Endothelial cell of umbilical vein (primary cell): ENCODE measurements at regions of chr6 and their contacts with region 1.

Region 1: DNA sequence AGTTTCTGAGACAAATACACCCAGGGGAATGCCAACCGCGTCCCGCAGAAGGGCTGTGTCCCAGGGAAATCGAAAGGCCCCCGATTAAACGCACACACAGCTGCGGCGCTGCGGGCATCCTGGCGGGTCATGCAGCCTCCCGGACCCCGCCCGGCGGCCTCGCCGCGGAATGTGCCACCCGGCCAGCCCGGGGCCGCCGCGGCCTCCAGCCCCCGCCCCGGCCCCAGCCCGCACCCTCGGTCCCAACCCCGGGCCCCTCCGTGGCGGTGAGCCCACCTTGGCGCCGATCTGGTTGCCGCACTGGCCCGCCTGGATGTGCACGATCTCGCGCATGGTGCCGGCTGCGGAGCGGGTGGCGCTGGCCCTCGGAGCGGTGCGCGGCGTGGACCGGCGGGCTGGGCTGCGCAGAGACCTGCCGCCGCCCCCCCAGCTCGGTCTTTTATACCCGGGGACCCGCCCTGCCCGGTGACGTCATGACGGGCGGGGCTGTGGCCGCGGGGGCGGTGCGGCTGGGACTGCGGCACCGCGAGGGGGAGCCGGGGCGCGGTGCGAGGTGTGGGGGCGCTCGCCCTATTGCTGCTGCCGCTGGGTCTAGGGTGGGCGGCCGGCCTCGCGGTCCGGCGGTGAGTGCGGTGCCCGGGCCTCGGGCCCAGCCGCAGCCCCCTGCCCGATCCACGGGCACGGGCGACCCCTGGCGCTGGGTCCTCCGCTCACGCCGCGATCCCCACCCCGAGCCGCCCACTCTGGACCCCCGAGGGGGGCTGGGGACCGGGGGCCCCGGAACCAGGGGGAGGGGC is at the start of gene TUBB2A:
- DNase-seq: peak; percentile 72
- H3K4me3 ChIP-seq: peak within 1 kb of the TSS; percentile 70 to 88 (median 84)
- H3K27ac ChIP-seq: peak within 1 kb of the TSS; percentile 74
- H3K4me1 ChIP-seq: peaks cover 3% of the 10 kb centered on the region
- H3K27me3 ChIP-seq: no peaks in the 10 kb centered on the region
- CTCF ChIP-seq: peak; percentile 48 to 49
- POLR2A ChIP-seq: peak; percentile 98
- total RNA-seq, gene TUBB2A: 73.2 and 80.3 TPM in 2 replicates

Region 2: GRCh38 chr6:3068329-3069214 is 88.8 kb before region 1 on chr6 and contains the start of gene RIPK1:
- CTCF ChIA-PET with region 1: no interaction called
- POLR2A ChIA-PET with region 1: interaction called, 3 read pairs
- dilution Hi-C with region 1: no loop called
- intact Hi-C with region 1: loop called (anchors 5 kb)
- DNase-seq: peak; percentile 82
- H3K4me3 ChIP-seq: peak within 1 kb of the TSS; percentile 66 to 92 (median 78)
- H3K27ac ChIP-seq: peak within 1 kb of the TSS; percentile 73
- H3K4me1 ChIP-seq: peaks cover 9% of the 10 kb centered on the region
- H3K27me3 ChIP-seq: peaks cover 0 to 7% of the 10 kb centered on the region in 2 experiments
- CTCF ChIP-seq: peak in 1 of 2 donors; percentile 14
- POLR2A ChIP-seq: peak; percentile 78
- total RNA-seq, gene RIPK1: 20.2 and 20.6 TPM in 2 replicates

Region 3: GRCh38 chr6:3125815-3126214 is 31.5 kb before region 1 on chr6:
- CTCF ChIA-PET with region 1: interaction called, 11 read pairs
- POLR2A ChIA-PET with region 1: no interaction called
- dilution Hi-C with region 1: no loop called
- intact Hi-C with region 1: no loop called
- DNase-seq: no peak
- H3K4me3 ChIP-seq: no peak overlapping the region
- H3K27ac ChIP-seq: no peak overlapping the region
- H3K4me1 ChIP-seq: no peaks in the 10 kb centered on the region
- H3K27me3 ChIP-seq: no peaks in the 10 kb centered on the region
- CTCF ChIP-seq: no peak
- POLR2A ChIP-seq: no peak

Region 4: GRCh38 chr6:3231247-3232016 is 74.1 kb after region 1 on chr6:
- CTCF ChIA-PET with region 1: interaction called, 7 read pairs
- POLR2A ChIA-PET with region 1: no interaction called
- dilution Hi-C with region 1: no loop called
- intact Hi-C with region 1: loop called (anchors 2 kb)
- DNase-seq: peak; percentile 46
- H3K4me3 ChIP-seq: peak overlapping the region; percentile 42 to 64 (median 45)
- H3K27ac ChIP-seq: no peak overlapping the region
- H3K4me1 ChIP-seq: peaks cover 23% of the 10 kb centered on the region
- H3K27me3 ChIP-seq: peaks cover 72 to 86% of the 10 kb centered on the region in 2 experiments
- CTCF ChIP-seq: no peak
- POLR2A ChIP-seq: no peak

Region 5: GRCh38 chr6:3258720-3259490 is 101.6 kb after region 1 on chr6 and contains the start of gene PSMG4:
- CTCF ChIA-PET with region 1: interaction called, 10 read pairs
- POLR2A ChIA-PET with region 1: interaction called, 4 read pairs
- dilution Hi-C with region 1: no loop called
- intact Hi-C with region 1: loop called (anchors 1 kb)
- DNase-seq: peak; percentile 84
- H3K4me3 ChIP-seq: peak within 1 kb of the TSS; percentile 36 to 98 (median 41)
- H3K27ac ChIP-seq: peak within 1 kb of the TSS; percentile 10
- H3K4me1 ChIP-seq: peaks cover 7% of the 10 kb centered on the region
- H3K27me3 ChIP-seq: peaks cover 4 to 5% of the 10 kb centered on the region in 2 experiments
- CTCF ChIP-seq: no peak
- POLR2A ChIP-seq: peak; percentile 81
- total RNA-seq, gene PSMG4: 31.1 and 31.4 TPM in 2 replicates